ENCODE measurements at regions of chr7 and their contacts with region 1.

Region 1: DNA sequence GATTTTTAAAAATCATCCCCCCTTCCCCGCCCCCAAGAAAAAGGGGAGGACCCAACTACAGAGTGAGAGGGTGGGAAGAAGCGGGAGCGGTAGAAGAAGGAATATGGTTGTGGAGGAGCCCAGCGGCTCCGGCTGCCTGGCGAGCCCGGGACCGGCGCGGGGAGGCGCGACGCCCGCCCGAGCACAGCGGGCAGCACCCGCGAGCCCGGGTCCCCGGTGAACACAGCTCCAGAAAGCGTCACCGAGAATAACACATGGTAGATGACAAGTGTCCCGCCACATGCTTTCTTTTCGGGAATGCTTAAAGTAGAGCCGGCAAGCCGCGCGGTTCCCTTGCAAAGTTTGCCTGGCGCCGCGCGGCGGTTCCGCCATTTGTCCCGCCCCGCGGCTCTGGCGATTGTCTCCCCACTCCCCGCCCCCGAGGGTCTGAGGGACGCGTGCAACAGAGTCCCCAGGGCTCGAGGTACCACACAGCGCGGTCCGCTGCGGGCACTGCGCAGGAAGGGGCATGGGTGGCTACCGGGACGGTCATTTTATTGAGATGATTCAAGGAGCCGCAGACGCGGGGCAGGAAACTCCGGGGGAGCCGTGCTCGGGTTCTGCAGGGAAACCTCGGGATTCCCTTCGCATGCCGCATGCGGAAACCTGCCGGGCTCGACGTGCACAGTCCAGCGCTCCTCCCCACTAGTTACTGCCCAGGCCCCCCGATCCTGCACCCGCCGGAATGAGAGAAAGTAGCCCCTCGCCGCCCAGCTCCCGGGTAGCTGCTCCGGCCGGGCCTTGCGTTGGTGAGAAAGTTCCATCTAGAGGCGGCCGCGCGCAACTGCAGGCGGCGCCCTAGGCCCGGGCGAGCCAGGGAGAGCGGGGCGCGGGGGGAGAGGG is 781 bp upstream of the GRM8 start:
- DNase-seq: peak; percentile 46 to 83 (median 59)
- ATAC-seq: peak; percentile 70 to 93 (median 90)
- H3K4me3 ChIP-seq: peak overlapping the region; percentile 50 to 78 (median 68)
- H3K27ac ChIP-seq: peak overlapping the region in 1 of 12 donors; percentile 19
- H3K4me1 ChIP-seq: peaks cover 0 to 32% (median 20%) of the 10 kb centered on the region in 12 donors
- H3K27me3 ChIP-seq: peaks cover 13 to 87% (median 42%) of the 10 kb centered on the region in 9 donors
- CTCF ChIP-seq: peak; percentile 78 to 98 (median 90)
- POLR2A ChIP-seq: no peak

Region 2: GRCh38 chr7:126803060-126803665 is 450.4 kb before region 1 on chr7:
- intact Hi-C with region 1: loop called in 4 of 10 experiments (anchors 5 to 10 kb)
- DNase-seq: no peak
- ATAC-seq: peak in 1 of 4 donors; percentile 34
- H3K4me3 ChIP-seq: no peak overlapping the region
- H3K27ac ChIP-seq: no peak overlapping the region
- H3K4me1 ChIP-seq: no peaks in the 10 kb centered on the region
- H3K27me3 ChIP-seq: peaks cover 0 to 8% (median 0%) of the 10 kb centered on the region in 9 donors
- CTCF ChIP-seq: peak; percentile 28 to 64 (median 48)
- POLR2A ChIP-seq: no peak

Region 3: GRCh38 chr7:126856691-126857291 is 396.7 kb before region 1 on chr7:
- intact Hi-C with region 1: loop called in 1 of 10 experiments (anchors 10 kb)
- DNase-seq: no peak
- ATAC-seq: no peak
- H3K4me3 ChIP-seq: no peak overlapping the region
- H3K27ac ChIP-seq: no peak overlapping the region
- H3K4me1 ChIP-seq: no peaks in the 10 kb centered on the region
- H3K27me3 ChIP-seq: peaks cover 0 to 5% (median 0%) of the 10 kb centered on the region in 9 donors
- CTCF ChIP-seq: peak in 10 of 12 donors; percentile 8 to 52 (median 32)
- POLR2A ChIP-seq: no peak

Region 4: DNA sequence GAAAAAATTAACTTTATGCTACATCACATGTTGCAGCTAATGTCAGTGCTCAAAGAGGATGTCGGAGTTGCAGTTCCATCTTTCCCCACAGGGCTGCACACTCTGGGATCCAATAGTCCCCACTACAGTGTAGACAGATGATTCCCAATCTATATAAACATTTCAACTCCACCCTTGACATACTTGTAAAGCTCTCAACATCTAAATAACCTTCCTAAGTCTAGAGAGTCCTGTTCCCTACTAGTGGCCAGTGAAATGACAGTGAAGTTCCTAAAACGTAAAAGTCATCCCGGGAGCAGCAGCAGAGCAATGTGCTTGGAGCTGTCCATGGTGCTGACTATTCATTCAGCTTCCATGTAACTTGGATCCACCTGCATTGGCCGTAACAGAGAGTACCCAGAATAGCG is 145.9 kb before region 1 on chr7:
- intact Hi-C with region 1: loop called in 4 of 10 experiments (anchors 5 to 10 kb)
- DNase-seq: peak in 3 of 5 donors; percentile 21 to 32 (median 26)
- ATAC-seq: peak in 1 of 4 donors; percentile 70
- H3K4me3 ChIP-seq: no peak overlapping the region
- H3K27ac ChIP-seq: no peak overlapping the region
- H3K4me1 ChIP-seq: no peaks in the 10 kb centered on the region
- H3K27me3 ChIP-seq: peaks cover 0 to 5% (median 0%) of the 10 kb centered on the region in 9 donors
- CTCF ChIP-seq: peak; percentile 20 to 50 (median 36)
- POLR2A ChIP-seq: no peak

Region 5: DNA sequence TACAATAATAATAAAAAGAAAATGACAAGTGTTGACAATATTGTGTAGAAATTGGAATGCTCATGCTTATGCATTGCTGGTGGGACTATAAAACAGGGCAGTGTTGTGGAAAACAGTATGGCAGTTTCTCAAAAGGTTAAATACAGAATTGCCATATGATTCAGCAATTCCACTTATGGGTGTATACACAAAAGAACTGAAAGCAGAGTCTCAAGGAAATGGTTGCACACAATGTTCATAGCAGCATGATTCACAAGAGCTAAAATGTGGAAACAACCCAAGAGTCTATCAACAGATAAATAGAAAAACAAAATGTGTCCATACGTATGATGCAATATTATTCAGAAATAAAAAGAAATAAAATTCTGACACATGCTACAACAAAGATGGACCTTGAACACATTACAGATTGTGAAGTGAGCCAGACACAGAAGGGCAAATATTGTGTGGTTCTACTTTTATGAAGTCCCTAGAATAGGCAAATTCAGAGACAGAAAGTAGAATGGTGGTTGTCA is 64.0 kb after region 1 on chr7:
- intact Hi-C with region 1: no loop called
- DNase-seq: no peak
- ATAC-seq: no peak
- H3K4me3 ChIP-seq: no peak overlapping the region
- H3K27ac ChIP-seq: no peak overlapping the region
- H3K4me1 ChIP-seq: no peaks in the 10 kb centered on the region
- H3K27me3 ChIP-seq: peaks cover 0 to 12% (median 0%) of the 10 kb centered on the region in 9 donors
- CTCF ChIP-seq: no peak
- POLR2A ChIP-seq: no peak

Region 6: DNA sequence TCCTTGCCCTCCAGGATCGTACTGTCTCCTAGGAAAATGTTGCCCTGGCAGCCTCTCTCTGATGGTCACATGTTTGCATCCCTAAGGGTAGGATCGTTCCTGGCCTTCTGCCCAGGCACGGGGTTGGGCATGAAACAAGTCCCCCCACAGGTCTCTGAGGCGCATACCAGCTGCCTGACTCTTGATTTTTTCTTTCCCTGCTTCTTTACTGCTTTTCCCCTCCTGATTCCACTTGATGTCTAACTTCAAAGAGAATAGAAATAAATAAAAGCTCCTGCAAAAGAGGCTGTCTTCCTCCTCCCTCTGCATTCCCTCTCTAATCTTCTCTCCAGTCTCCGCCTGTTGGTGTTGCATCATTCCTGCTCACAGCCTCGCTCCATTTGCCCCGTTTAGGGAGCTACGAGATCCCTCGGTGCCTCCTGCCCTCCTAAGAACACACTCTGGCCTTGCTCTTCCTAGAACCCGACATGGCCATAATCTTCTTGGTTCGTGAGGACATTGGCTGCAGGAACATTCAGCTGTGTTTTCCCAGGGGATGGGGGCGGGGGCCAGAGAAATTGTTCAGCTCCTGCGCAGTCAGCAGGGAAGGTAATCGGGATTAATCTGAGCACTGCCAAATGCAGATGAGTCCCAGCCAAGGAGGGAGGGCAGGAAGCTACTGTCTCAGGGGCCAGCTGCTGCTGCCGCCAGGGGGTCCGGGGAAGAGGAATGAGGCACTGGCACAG is 1013.5 kb after region 1 on chr7:
- intact Hi-C with region 1: no loop called
- DNase-seq: peak in 4 of 5 donors; percentile 22 to 70 (median 52)
- ATAC-seq: peak; percentile 34 to 68 (median 47)
- H3K4me3 ChIP-seq: peak overlapping the region in 4 of 12 donors; percentile 13 to 29 (median 20)
- H3K27ac ChIP-seq: peak overlapping the region in 1 of 12 donors; percentile 43
- H3K4me1 ChIP-seq: peaks cover 0 to 29% (median 11%) of the 10 kb centered on the region in 12 donors
- H3K27me3 ChIP-seq: peaks cover under 1 to 65% (median 24%) of the 10 kb centered on the region in 9 donors
- CTCF ChIP-seq: no peak
- POLR2A ChIP-seq: no peak